ENCODE measurements at regions of chr7 and their contacts with region 1.

Region 1: GRCh38 chr7:21427182-21427870 is 557 bp upstream of the SP4 start:
- DNase-seq: peak; percentile 99
- ATAC-seq: peak; percentile 93 to 95 (median 93)
- H3K4me3 ChIP-seq: peak overlapping the region; percentile 86
- H3K27ac ChIP-seq: peak overlapping the region; percentile 97
- H3K4me1 ChIP-seq: peaks cover 38% of the 10 kb centered on the region
- H3K27me3 ChIP-seq: no peaks in the 10 kb centered on the region
- CTCF ChIP-seq: peak; percentile 22

Region 2: DNA sequence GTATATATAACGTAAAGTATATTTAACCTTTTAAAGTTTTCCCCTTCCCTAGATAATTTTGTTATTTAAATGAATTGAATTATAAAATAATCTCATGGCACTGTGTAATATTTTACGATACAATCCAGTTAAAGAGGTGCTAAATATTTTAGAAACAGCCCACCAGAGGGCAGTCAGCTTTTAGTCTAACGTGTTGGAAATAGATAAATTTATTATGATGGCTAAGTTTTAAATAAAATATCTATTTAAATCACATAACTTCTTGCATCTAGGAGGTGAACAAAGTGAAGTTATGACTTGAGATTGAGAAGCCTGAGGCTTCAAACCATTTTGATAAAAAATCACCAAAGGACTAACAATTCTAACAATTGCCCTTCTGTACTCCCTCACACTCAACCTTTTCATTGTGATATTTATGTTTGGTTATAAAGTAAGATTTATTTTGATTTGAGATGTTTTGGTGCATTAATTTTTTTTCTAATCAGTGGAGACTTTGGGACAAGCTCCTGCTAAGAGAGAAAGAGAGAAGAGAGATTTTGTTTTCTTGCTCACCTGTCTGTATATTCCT is 170.9 kb before region 1 on chr7:
- intact Hi-C with region 1: loop called in 1 of 2 experiments (anchors 5 kb)
- DNase-seq: no peak
- ATAC-seq: no peak
- H3K4me3 ChIP-seq: no peak overlapping the region
- H3K27ac ChIP-seq: no peak overlapping the region
- H3K4me1 ChIP-seq: no peaks in the 10 kb centered on the region
- H3K27me3 ChIP-seq: peaks cover 2 to 45% (median 3%) of the 10 kb centered on the region in 3 donors
- CTCF ChIP-seq: peak; percentile 40

Region 3: GRCh38 chr7:21706546-21706945 is 279.2 kb after region 1 on chr7:
- intact Hi-C with region 1: no loop called
- DNase-seq: no peak
- ATAC-seq: no peak
- H3K4me3 ChIP-seq: no peak overlapping the region
- H3K27ac ChIP-seq: no peak overlapping the region
- H3K4me1 ChIP-seq: no peaks in the 10 kb centered on the region
- H3K27me3 ChIP-seq: no peaks in the 10 kb centered on the region
- CTCF ChIP-seq: no peak

Region 4: DNA sequence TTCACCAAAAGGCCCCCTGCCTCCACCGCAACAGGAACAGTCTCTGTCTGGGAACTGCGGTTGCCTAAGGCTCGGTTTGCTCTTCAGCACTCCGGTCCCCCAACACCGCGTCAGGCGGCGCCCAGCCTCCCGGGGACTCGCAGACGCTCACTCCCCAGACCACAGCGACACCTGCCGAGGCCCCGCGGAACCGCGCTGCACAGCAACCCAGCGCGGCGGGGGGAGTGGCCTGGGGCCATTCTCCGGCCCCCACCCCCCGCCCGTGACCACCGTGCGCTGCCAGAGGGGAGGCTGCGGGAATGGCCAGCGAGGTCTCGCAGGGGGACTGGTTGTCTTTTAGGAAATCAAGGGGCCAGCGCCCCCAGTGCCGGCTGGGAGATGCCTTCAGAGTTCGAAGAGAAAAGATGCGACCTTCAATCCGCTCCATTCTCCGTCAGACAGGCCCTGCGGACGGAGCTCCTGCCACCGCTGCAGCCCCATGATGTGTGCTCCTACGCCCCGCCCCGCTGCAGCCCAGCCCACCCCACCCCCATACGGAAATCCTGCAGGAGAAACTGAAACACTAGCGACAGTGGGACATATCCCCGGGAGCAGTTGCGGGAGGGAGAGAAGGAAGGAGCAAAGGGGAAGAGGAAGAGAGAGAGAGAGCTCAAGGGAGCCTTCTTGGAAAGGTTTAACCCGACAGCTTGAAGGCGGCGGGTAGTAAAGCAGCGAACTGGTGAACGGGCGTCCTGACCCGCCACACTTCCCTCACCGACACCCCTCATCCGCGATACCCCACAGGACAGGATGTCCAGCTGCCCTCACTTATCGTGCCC is 655.8 kb after region 1 on chr7:
- intact Hi-C with region 1: loop called in 1 of 2 experiments (anchors 10 kb)
- DNase-seq: peak; percentile 87 to 93
- ATAC-seq: peak; percentile 91 to 99 (median 96)
- H3K4me3 ChIP-seq: peak overlapping the region; percentile 74
- H3K27ac ChIP-seq: peak overlapping the region; percentile 68
- H3K4me1 ChIP-seq: peaks cover 11% of the 10 kb centered on the region
- H3K27me3 ChIP-seq: peaks cover 0 to 14% (median 0%) of the 10 kb centered on the region in 3 donors
- CTCF ChIP-seq: peak; percentile 89